MCF 10A (cell line): ENCODE measurements at regions of chr10 and their contacts with region 1.

Region 1: DNA sequence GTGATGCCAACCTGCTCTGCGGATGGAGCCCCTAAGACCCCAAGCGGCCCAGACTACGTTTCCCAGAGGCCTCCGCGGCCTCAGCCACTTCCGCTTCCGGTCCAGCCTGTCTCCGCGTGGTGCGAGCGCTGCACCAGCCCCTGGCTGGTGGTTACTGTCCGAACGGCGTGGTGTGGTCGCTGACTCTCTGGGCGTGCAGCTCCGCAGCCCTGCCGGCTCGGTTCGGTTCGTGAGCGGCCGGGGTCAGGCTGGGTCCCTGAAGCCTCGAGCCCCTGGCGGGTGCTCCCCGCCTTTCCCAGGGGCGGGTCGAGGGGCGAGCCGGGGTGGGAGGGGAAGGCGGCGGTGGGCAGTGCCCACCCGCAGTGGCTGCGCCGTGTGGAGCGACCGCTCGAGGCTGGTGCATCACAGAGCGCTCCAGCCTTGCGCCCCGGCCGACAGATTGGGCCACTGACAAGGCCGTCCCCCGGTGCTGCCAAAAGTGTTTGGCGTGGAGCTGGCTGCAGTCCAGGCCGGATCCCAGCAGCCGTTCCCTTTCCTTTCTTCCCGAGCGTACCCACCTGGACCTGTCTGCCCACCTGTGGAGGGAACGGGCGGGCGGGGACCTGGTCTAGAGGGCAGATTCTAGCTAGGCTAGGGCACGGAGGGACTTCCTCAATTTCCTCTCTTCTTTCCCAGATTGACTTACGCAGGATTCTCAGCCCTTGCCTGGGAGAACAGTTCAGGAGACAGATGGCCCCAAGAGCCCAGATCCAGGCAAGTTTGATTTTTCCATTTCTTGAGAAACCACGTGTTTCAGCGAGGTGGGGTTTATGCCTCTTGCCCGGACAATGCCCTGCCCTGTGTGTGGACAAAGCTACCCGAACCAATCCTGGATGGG is at the start of gene ZNF485:
- DNase-seq: peak; percentile 42
- H3K4me3 Mint-ChIP-seq: peak within 1 kb of the TSS; percentile 78
- H3K27ac Mint-ChIP-seq: peak within 1 kb of the TSS; percentile 64
- H3K4me1 Mint-ChIP-seq: peaks cover 17% of the 10 kb centered on the region
- H3K27me3 Mint-ChIP-seq: no peaks in the 10 kb centered on the region
- CTCF ChIP-seq: no peak
- total RNA-seq, gene ZNF485: 4.9 and 6.5 TPM in 2 replicates

Region 2: GRCh38 chr10:43263551-43264343 is 342.8 kb before region 1 on chr10:
- CTCF ChIA-PET with region 1: no interaction called
- POLR2A ChIA-PET with region 1: no interaction called
- intact Hi-C with region 1: no loop called
- DNase-seq: no peak
- H3K4me3 Mint-ChIP-seq: no peak overlapping the region
- H3K27ac Mint-ChIP-seq: no peak overlapping the region
- H3K4me1 Mint-ChIP-seq: peaks cover 22% of the 10 kb centered on the region
- H3K27me3 Mint-ChIP-seq: peaks cover 8% of the 10 kb centered on the region
- CTCF ChIP-seq: peak; percentile 21

Region 3: DNA sequence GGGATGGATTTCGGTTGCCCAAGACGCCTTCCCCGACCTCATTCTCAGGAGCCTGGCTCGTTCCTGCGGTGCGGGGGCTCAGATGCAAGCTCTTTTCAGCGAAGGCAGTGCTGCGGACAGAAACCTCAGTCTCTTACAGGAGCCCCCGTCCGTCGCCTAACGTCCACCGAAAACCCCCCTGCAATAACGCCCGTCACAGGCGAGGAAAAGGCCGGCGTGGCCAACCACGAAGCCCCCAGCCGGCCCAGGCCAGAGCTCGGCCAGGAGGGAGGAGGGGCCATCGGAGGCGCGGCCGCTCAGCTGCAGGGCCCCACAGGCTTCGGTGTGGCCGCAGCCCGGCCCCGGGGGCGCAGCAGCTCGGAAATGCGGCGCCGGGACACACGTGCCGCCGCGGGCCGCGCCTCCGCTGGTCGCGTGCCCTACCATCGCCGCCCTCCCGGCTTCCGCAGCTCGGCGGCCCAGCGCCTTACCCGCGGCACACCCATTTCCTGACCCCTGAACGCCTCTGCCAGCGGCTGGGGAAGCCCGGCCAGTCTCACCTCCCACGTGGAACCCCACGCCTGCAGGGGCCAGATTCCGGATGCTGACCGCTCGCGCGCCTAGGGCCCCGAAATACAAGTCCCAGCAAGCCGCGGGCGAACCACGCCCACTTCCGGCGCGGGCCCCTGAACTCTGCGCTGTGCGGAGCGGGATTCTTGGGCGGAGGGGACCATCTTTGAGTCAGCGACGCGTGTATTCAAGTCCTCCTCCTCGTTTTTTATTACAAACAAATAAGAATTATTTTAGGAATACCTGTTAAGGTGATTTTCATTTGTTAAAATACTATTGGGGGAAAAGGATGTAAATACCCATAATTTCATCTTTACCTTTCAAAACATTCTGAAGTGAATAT is 32.3 kb before region 1 on chr10 and contains the start of gene ZNF239:
- CTCF ChIA-PET with region 1: no interaction called
- POLR2A ChIA-PET with region 1: no interaction called
- intact Hi-C with region 1: loop called (anchors 5 kb)
- DNase-seq: peak; percentile 76
- H3K4me3 Mint-ChIP-seq: peak within 1 kb of the TSS; percentile 91
- H3K27ac Mint-ChIP-seq: peak within 1 kb of the TSS; percentile 60
- H3K4me1 Mint-ChIP-seq: peaks cover 6% of the 10 kb centered on the region
- H3K27me3 Mint-ChIP-seq: no peaks in the 10 kb centered on the region
- CTCF ChIP-seq: no peak
- total RNA-seq, gene ZNF239: 9.9 and 16.4 TPM in 2 replicates

Region 4: DNA sequence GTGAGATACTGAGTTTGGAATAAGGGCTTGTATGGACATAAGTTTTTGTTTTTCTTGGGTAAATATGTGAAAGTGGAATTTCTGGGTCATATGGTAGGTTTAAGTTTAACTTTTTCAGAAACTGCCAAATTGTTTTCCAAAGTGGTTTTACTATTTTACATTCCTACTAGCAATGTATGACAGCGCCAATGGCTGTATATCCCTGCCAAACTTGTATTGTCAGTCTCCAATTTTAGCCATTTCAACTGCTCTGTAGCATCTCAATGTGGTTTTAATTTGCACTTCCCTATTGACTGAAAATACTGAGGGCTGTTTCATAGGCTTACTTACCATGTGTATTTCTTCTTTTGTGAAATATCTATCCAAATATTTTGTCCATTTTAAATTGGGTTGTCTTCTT is 132.6 kb after region 1 on chr10:
- CTCF ChIA-PET with region 1: no interaction called
- POLR2A ChIA-PET with region 1: no interaction called
- intact Hi-C with region 1: no loop called
- DNase-seq: no peak
- H3K4me3 Mint-ChIP-seq: no peak overlapping the region
- H3K27ac Mint-ChIP-seq: no peak overlapping the region
- H3K4me1 Mint-ChIP-seq: no peaks in the 10 kb centered on the region
- H3K27me3 Mint-ChIP-seq: peaks cover 21% of the 10 kb centered on the region
- CTCF ChIP-seq: no peak

Region 5: DNA sequence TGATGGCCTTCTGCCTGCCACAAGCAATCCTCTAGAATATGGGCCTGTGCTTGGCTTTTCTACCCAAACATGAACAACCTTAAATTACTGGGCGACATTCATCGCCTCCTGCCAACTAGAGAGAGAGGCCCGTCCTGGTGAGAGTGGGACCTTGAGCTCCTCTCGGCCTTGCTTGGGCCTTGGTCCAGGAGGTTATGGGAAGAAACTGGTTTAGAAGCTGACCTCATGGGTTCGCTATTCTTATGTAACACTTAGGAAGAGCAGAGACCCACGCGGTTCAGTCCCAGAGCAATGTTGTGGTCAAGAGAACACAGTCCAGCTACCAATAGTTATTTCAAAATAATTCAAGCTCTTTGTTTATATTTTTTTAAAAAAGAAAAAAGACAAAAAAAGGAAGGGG is 218.4 kb after region 1 on chr10:
- CTCF ChIA-PET with region 1: no interaction called
- POLR2A ChIA-PET with region 1: no interaction called
- intact Hi-C with region 1: no loop called
- DNase-seq: no peak
- H3K4me3 Mint-ChIP-seq: no peak overlapping the region
- H3K27ac Mint-ChIP-seq: no peak overlapping the region
- H3K4me1 Mint-ChIP-seq: no peaks in the 10 kb centered on the region
- H3K27me3 Mint-ChIP-seq: peaks cover 18% of the 10 kb centered on the region
- CTCF ChIP-seq: no peak